ENCODE measurements at regions of chr6 and their contacts with region 1.

Region 1: DNA sequence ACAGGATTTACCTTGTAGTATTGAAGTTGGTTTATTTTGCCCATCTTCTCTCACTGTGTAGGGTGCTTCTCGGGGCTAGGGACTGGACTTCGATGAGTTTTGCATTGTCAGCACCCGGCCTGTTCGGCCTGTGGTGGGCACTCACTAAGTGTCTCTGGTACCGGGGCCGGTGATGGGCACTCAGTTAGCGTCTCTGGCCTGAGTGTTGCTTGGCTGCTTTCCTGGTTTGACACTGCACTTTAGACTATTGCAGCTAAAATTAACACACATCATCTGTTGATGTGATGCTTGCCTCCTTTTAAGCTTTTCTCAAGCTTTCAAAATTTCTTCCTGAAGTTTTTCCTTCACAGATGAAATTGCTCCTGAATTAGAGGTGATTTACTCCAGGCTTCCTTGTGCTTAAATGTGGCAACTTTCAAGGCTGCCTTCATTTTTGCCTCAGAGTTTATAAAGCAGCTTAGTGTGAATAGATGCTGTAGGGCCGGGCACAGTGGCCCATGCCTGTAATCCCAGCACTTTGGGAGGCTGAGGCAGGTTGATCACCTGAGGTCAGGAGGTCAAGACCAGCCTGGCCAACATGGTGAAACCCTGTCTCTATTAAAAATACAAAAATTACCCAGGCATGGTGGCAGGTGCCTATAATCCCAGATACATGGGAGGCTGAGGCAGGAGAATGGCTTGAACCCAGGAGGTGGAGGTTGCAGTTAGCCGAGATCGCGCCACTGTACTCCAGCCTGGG is 41.7 kb upstream of the TULP4 start:
- DNase-seq: no peak
- ATAC-seq: peak; percentile 6
- H3K4me3 Mint-ChIP-seq: peak overlapping the region; percentile 40
- H3K27ac Mint-ChIP-seq: peak overlapping the region; percentile 80
- H3K4me1 Mint-ChIP-seq: peaks cover 29% of the 10 kb centered on the region
- H3K27me3 Mint-ChIP-seq: no peaks in the 10 kb centered on the region

Region 2: GRCh38 chr6:158284007-158284875 is 13.7 kb after region 1 on chr6:
- CTCF ChIA-PET with region 1: interaction called, 16 read pairs
- POLR2A ChIA-PET with region 1: no interaction called
- DNase-seq: no peak
- ATAC-seq: peak; percentile 48
- H3K4me3 Mint-ChIP-seq: no peak overlapping the region
- H3K27ac Mint-ChIP-seq: peak overlapping the region; percentile 44
- H3K4me1 Mint-ChIP-seq: peaks cover 41% of the 10 kb centered on the region
- H3K27me3 Mint-ChIP-seq: no peaks in the 10 kb centered on the region